ENCODE measurements at regions of chr19 and their contacts with region 1.

Region 1: GRCh38 chr19:35648017-35648961 is at the start of gene COX6B1:
- DNase-seq: peak; percentile 93
- H3K4me3 Mint-ChIP-seq: peak within 1 kb of the TSS; percentile 96
- H3K27ac Mint-ChIP-seq: peak within 1 kb of the TSS; percentile 71
- H3K4me1 Mint-ChIP-seq: peaks cover 17% of the 10 kb centered on the region
- H3K27me3 Mint-ChIP-seq: no peaks in the 10 kb centered on the region
- total RNA-seq, gene COX6B1: 431 and 461 TPM in 2 replicates

Region 2: GRCh38 chr19:35612559-35613321 is 35.5 kb before region 1 on chr19 and contains the start of gene HAUS5:
- intact Hi-C with region 1: loop called (anchors 1 kb)
- DNase-seq: peak; percentile 94
- H3K4me3 Mint-ChIP-seq: peak within 1 kb of the TSS; percentile 81
- H3K27ac Mint-ChIP-seq: peak within 1 kb of the TSS; percentile 83
- H3K4me1 Mint-ChIP-seq: peaks cover 20% of the 10 kb centered on the region
- H3K27me3 Mint-ChIP-seq: no peaks in the 10 kb centered on the region
- total RNA-seq, gene HAUS5: 42.5 and 43.1 TPM in 2 replicates

Region 3: GRCh38 chr19:35628565-35629331 is 19.5 kb before region 1 on chr19 and contains the start of gene RBM42:
- intact Hi-C with region 1: loop called (anchors 1 kb)
- DNase-seq: peak; percentile 97
- H3K4me3 Mint-ChIP-seq: peak within 1 kb of the TSS; percentile 100
- H3K27ac Mint-ChIP-seq: peak within 1 kb of the TSS; percentile 99
- H3K4me1 Mint-ChIP-seq: peaks cover 14% of the 10 kb centered on the region
- H3K27me3 Mint-ChIP-seq: no peaks in the 10 kb centered on the region
- total RNA-seq, gene RBM42: 101 and 102 TPM in 2 replicates

Region 4: DNA sequence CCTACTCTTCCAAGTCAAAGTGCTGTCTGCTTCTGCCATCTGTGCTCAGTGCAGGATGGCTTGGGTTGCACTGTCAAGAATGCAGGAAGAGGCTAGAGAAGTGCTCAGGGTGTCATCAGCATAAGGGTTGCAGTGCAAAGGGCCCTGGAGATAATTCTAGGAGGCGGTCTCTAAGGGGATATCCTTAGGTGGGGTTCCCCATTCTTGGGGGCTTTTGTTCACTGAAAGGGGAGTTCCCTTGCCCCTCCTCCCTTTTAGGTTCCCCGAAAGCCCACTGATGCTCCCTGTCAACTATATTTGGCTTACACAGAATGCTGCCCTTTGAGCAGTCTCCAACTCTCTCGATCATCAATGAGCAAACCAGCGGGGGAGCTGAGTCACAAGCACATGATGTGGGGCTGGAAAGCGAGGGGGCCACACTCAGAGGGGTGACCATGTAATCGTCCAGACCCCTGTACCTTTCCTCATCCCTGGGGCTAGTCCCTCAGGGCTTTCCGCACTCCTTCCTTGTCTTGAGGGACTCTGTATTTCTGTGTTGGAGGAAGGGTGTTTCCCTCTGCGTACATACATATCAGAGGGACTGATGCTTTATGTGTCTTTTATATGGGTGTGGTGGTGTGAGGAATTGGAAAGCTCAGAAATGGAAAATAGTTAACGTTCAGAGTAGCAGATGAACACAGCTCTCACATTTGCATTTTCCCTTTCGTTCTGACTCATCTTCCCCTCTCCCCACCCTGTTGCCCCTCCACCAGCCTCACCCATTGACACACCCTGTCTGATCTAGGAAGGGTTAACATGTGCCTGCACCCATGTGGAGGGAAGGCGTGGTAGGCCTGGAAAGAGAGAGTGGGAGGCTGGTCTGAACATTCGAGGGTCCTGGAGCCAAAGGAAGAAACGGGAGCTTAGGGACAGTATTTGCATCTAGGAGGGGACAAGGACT is 62.8 kb after region 1 on chr19:
- intact Hi-C with region 1: loop called (anchors 1 kb)
- DNase-seq: peak; percentile 71
- H3K4me3 Mint-ChIP-seq: peak overlapping the region; percentile 66
- H3K27ac Mint-ChIP-seq: peak overlapping the region; percentile 100
- H3K4me1 Mint-ChIP-seq: peaks cover 40% of the 10 kb centered on the region
- H3K27me3 Mint-ChIP-seq: no peaks in the 10 kb centered on the region